A549 (cell line): ENCODE measurements at regions of chr16 and their contacts with region 1.

Region 1: DNA sequence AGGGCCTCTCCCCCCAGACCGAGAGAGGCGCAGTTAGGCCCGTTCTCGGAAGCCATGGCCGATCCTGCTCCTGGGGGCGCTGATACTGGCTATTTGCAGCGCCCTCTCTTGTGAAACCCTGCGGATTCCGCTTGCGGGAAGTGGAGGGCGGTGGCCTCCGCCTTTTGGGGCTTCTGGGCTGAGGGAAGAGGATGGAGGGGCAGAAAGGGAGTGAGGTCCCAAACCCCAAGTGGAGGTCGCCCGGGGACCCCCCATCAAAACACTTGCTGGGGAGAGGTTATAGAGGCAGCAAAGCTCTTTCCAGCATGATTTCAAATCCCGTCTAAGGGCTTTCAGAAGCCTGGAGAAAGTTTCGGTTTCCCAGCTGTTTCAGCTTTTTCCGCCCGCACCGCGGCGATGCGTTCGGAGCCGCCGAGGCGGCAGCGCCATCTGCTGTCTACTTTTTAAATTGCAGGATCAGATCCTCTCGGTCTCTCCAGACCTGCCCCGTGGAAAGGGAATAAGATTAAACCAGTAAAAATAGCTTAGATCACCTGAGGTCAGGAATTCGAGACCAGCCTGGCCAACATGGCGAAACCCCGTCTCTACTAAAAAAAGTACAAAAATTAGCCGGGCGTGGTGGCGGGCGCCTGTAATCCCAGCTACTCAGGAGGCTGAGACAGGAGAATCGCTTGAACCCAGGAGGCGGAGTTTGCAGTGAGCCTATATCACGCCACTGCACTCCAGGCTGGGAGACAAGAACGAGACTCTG is 15.8 kb downstream of the SNX20 start:
- DNase-seq: peak; percentile 56 to 74
- ATAC-seq: peak; percentile 81 to 95
- H3K4me3 ChIP-seq: peak overlapping the region; percentile 26; the same call in 1 of the 3 replicates
- H3K27ac ChIP-seq: peak overlapping the region in 1 of 2 experiments; percentile 53; a peak in 3 of 6 replicates
- H3K4me1 ChIP-seq: no peaks in the 10 kb centered on the region
- CTCF ChIP-seq: peak; percentile 88
- EP300 ChIP-seq: no peak
- POLR2A ChIP-seq: no peak
- RAD21 ChIP-seq: peak; percentile 80 to 85

Region 2: DNA sequence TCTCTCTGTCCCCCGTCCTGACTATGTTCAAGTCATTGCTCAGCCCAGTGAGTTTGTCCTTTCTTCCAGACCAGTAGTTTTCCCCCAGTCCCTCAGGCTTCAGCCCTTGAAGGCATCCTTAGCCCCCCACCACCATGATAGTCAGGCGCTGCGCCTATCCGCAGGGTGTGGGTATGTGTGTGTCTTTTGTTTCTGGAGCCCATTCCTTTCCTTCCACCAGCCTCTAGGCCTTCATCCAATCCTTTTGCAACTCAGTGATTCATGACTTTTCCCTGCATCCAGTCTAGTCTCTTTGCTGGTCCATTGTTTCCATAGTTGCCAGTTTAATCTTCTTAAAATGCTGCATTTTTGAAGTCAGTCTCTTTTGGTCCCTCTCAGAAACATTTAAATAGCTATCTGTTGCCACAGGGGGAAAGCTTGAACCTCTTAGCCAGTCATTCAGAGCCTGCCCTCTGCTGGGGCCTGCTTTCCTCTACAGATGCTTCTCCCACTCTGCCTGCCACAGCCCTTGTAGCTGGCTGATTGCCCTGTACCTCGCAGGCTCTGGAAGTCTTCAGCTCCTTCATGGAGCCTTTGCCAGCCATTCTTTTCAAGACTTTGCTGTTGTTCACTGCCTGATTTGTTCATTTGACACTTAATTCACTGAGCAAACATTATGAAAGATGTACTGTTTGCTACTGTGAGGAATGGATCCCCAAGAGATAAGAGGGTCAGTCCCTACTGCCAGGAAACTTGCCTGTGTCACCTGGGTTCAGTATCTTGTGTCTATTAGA is 454.9 kb before region 1 on chr16:
- CTCF ChIA-PET with region 1: interaction called, 17 read pairs
- POLR2A ChIA-PET with region 1: no interaction called
- DNase-seq: peak; percentile 52 to 78
- ATAC-seq: peak; percentile 98
- H3K4me3 ChIP-seq: no peak overlapping the region
- H3K27ac ChIP-seq: peak overlapping the region in 1 of 2 experiments; percentile 5; a peak in 3 of 6 replicates
- H3K4me1 ChIP-seq: peaks cover 44% of the 10 kb centered on the region
- CTCF ChIP-seq: peak; percentile 62
- EP300 ChIP-seq: no peak
- POLR2A ChIP-seq: no peak
- RAD21 ChIP-seq: peak; percentile 76 to 77

Region 3: DNA sequence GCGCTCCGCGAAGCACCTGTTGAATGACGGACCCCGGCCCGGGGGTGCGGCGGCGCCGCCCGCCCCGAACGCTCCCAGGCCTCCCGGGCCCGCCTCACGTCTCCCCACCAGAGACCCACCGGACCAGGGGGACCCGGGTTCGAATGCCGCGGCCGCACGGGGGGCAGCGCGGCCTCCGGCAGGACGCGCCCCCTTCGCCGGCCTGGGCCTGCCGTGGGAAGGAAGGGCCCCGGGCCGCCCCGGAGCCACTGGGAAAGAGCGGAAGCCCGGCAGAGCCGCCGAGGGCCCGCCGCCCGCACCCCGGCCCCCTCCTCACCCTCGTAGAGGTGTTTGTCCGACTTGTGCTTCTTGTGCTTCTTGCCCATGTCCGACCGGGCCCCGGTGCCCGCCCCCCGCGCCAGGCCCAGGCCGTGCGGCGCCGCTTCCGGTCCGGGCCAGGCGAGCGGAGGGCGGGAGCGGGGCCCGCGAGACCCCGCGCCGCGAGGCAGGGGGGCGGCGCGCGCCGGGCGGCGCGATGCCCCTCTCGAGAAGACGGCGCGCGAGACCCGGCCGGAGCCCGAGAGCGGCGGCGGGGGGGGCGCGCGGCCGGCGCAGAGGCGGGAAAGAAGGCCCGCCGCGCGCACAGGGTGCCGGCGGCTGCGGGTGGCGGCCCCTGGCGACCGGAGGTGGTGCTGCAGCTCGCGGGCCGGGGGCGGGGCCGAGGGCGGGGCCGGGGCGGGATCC is 296.7 kb before region 1 on chr16 and contains the start of gene BRD7:
- CTCF ChIA-PET with region 1: interaction called, 132 read pairs
- POLR2A ChIA-PET with region 1: no interaction called
- DNase-seq: peak; percentile 53 to 54
- ATAC-seq: peak; percentile 77 to 81
- H3K4me3 ChIP-seq: peak within 1 kb of the TSS; percentile 100
- H3K27ac ChIP-seq: peak within 1 kb of the TSS; percentile 95 to 99
- H3K4me1 ChIP-seq: peaks cover 15% of the 10 kb centered on the region
- CTCF ChIP-seq: peak; percentile 69
- EP300 ChIP-seq: no peak
- POLR2A ChIP-seq: no peak
- RAD21 ChIP-seq: no peak
- polyA plus RNA-seq, gene BRD7: 94.5 and 102 TPM in 2 replicates

Region 4: DNA sequence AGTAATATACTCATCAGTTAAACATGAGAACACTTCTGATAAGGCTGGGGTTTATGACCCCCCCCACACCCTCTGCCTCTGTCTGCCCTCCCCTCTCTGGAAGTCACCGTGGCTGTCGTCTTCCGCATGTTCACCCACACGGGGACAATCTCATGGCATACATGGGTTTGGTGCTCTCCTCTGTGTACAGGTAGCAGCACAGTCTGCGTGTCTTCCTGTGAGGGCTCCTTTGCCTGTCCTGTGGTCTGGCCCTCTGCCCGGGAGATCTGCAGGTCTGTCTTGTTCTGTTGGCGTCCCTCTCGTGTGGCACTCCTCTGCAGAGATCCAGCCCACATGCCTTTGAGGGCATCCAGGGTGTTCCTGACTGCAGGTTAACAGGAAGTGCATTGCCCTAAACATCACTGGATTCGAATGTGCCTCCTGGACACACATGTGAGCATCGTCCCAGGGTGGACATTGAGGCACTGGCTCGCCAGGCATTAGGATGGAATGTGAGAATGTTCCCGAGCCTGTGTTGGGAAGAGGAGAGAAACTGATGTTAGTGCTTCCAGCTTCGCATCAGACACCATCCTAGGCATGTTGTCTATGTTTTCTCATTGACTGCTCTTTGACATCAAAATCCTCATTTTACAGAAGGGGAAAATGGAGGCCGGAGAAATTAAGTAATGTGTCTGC is 62.6 kb before region 1 on chr16:
- CTCF ChIA-PET with region 1: no interaction called
- POLR2A ChIA-PET with region 1: no interaction called
- DNase-seq: no peak
- ATAC-seq: no peak
- H3K4me3 ChIP-seq: no peak overlapping the region
- H3K27ac ChIP-seq: no peak overlapping the region
- H3K4me1 ChIP-seq: no peaks in the 10 kb centered on the region
- CTCF ChIP-seq: no peak
- EP300 ChIP-seq: no peak
- POLR2A ChIP-seq: no peak
- RAD21 ChIP-seq: no peak

Region 5: GRCh38 chr16:50624449-50624970 is 40.8 kb before region 1 on chr16:
- CTCF ChIA-PET with region 1: interaction called, 17 read pairs
- POLR2A ChIA-PET with region 1: no interaction called
- DNase-seq: no peak
- ATAC-seq: no peak
- H3K4me3 ChIP-seq: no peak overlapping the region
- H3K27ac ChIP-seq: no peak overlapping the region
- H3K4me1 ChIP-seq: no peaks in the 10 kb centered on the region
- CTCF ChIP-seq: no peak
- EP300 ChIP-seq: no peak
- POLR2A ChIP-seq: no peak
- RAD21 ChIP-seq: no peak

Region 6: GRCh38 chr16:50653633-50654519 is 11.4 kb before region 1 on chr16:
- CTCF ChIA-PET with region 1: interaction called, 32 read pairs
- POLR2A ChIA-PET with region 1: no interaction called
- DNase-seq: no peak
- ATAC-seq: no peak
- H3K4me3 ChIP-seq: no peak overlapping the region
- H3K27ac ChIP-seq: no peak overlapping the region
- H3K4me1 ChIP-seq: no peaks in the 10 kb centered on the region
- CTCF ChIP-seq: no peak
- EP300 ChIP-seq: no peak
- POLR2A ChIP-seq: no peak
- RAD21 ChIP-seq: no peak

Region 7: GRCh38 chr16:50696575-50697420 is 31.5 kb after region 1 on chr16:
- CTCF ChIA-PET with region 1: interaction called, 21 read pairs
- POLR2A ChIA-PET with region 1: no interaction called
- DNase-seq: peak; percentile 20 to 52
- ATAC-seq: peak in 1 of 2 experiments; percentile 61; a peak in 3 of 6 replicates
- H3K4me3 ChIP-seq: no peak overlapping the region
- H3K27ac ChIP-seq: no peak overlapping the region
- H3K4me1 ChIP-seq: 0 out of 3 replicates have a peak, but pooled peaks cover 5% of the 10 kb centered on the region
- CTCF ChIP-seq: no peak
- EP300 ChIP-seq: no peak
- POLR2A ChIP-seq: no peak
- RAD21 ChIP-seq: no peak

Region 8: DNA sequence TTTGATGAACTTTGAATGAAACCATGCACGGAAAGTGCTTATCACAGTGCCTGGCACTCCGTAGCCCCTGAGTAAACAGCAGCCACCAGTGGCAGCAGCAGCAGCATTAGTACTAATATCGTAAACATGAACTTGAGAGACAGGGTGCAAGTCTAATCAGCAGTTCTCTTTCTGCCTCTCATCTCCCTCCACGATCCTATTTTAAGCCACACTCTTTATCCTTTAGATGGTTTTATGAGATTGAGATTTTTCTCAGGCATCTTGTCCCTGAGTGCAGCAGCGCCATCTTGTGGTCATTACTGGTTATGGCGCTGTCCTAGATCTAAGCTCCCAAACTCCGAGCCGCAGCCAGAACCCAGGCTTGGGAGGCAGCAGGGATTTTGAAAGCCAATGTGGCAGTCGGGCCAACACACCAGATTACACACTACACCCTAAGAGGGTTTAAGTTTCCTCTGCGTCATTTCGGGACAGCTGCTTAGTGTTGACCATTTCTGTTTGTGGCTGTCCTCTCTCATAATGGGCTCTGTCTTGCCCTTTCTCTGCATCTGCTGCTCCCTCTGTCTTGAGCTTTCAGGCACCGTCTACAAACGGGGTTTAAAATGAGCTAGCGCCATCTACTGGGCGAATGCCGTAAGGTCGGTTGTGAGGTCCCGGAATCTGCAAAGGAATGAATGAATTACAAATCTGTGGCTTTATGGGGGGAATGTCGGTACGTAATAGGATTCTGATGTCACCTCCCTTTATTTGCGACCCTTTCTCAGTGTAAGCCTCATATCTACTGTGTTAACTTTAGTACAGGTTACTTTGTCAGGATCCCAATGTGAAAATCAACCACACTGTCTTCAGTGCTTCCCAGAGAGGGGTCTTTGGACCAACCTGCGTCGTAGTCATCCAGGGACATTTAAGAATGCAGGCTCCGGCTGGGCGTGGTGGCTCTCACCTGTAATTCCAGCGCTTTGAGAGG is 141.1 kb after region 1 on chr16:
- CTCF ChIA-PET with region 1: interaction called, 35 read pairs
- POLR2A ChIA-PET with region 1: no interaction called
- DNase-seq: peak; percentile 76 to 88
- ATAC-seq: peak; percentile 94 to 96
- H3K4me3 ChIP-seq: peak overlapping the region; percentile 26; the same call in 2 of the 3 replicates
- H3K27ac ChIP-seq: peak overlapping the region in 1 of 2 experiments; percentile 56; a peak in 1 of 6 replicates
- H3K4me1 ChIP-seq: no peaks in the 10 kb centered on the region
- CTCF ChIP-seq: peak; percentile 95
- EP300 ChIP-seq: no peak
- POLR2A ChIP-seq: no peak
- RAD21 ChIP-seq: peak; percentile 68 to 76